Caco-2 (cell line): ENCODE measurements at regions of chr11 and their contacts with region 1.

Region 1: DNA sequence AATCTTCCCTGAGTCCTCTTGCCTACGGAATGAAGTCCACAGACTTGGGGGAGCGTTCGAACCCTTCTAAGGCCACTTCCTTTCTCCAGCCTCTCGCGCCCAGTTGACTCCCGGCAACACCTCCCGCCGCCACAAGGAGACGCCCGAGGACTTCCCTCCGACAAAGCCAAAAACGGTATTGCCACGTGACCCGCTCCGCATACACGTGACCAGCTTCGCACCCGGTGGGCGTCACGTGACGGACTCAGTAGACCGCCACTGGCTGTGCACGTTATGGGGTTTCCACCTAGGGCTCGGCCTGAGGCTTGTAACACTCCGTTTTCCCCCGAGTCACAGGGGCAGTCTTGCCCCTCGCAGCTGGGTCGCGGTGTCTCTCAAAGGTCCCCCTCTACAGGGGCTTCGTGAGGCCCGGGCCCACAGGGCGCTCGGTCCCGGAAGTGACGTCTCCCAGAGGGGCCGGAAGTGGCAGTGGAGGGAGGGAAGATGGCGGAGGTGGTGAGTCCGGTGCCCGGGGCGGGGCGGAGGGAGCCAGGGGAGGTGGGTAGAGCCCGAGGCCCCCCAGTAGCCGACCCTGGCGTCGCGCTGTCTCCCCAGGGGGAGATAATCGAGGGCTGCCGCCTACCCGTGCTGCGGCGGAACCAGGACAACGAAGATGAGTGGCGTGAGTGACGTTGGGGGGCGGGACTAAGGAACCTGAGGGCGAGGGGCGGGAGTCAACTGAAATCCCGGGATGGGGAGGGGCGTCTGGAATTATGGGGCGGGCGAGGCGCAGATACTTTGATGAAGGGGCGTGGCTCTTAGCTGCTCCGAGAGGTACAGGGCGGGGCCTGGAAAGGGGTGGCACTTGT is at the start of gene KAT5:
- DNase-seq: peak; percentile 98 to 99
- H3K4me3 ChIP-seq: peak within 1 kb of the TSS; percentile 66
- H3K4me3 Mint-ChIP-seq: peak within 1 kb of the TSS; percentile 83
- H3K27ac Mint-ChIP-seq: peak within 1 kb of the TSS; percentile 98
- H3K4me1 ChIP-seq: peaks cover 21% of the 10 kb centered on the region
- H3K4me1 Mint-ChIP-seq: peaks cover 13% of the 10 kb centered on the region
- H3K27me3 ChIP-seq: no peaks in the 10 kb centered on the region
- H3K27me3 Mint-ChIP-seq: no peaks in the 10 kb centered on the region
- CTCF ChIP-seq: peak; percentile 97 to 98
- total RNA-seq, gene KAT5: 60.2 and 70.1 TPM in 2 replicates

Region 2: GRCh38 chr11:65773784-65774411 is 61.9 kb after region 1 on chr11:
- CTCF ChIA-PET with region 1: interaction called, 18 read pairs
- POLR2A ChIA-PET with region 1: interaction called, 5 read pairs
- intact Hi-C with region 1: loop called (anchors 5 kb)
- DNase-seq: no peak
- H3K4me3 ChIP-seq: no peak overlapping the region
- H3K4me3 Mint-ChIP-seq: no peak overlapping the region
- H3K27ac Mint-ChIP-seq: no peak overlapping the region
- H3K4me1 ChIP-seq: peaks cover 15% of the 10 kb centered on the region
- H3K4me1 Mint-ChIP-seq: peaks cover 15% of the 10 kb centered on the region
- H3K27me3 ChIP-seq: no peaks in the 10 kb centered on the region
- H3K27me3 Mint-ChIP-seq: no peaks in the 10 kb centered on the region
- CTCF ChIP-seq: no peak

Region 3: DNA sequence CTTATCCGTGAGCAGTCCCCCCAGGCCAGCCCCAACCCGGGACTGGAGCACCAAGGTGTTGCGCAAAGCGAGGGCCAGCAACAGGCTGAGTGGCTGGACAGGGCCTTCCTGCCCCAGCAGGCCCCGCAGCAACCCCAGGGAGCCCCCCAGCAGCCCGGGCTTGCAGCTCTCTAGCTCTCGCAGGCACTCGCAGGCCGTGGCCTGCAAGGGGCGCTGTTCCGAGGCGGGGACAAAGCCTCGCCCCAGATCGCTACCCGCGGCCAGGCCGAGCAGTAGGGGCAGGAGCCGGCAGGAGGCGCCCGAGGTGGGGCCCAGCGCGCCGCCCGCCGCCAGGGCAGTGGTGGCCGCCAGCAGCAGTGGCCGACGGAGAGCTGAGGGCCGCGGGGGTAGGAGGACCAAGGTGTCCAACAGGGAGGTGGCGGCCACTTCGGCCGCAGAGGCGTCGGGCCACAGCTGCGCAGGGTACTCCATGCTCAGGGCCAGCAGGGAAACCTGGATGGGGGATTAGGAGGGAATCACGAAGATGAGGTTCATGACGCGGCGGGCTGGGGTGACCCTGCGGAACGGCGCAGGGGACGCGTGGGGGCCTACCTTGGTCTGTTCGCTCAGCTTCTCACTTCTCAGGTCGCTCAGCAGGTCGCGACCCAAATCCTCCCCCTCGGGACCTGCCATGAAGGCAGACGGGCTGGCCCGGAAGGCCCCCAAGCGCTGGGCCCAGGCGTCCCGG is 68.0 kb after region 1 on chr11:
- CTCF ChIA-PET with region 1: interaction called, 18 read pairs
- POLR2A ChIA-PET with region 1: interaction called, 5 read pairs
- intact Hi-C with region 1: loop called (anchors 2 kb)
- DNase-seq: peak; percentile 66 to 82
- H3K4me3 ChIP-seq: peak overlapping the region; percentile 56
- H3K4me3 Mint-ChIP-seq: peak overlapping the region; percentile 91
- H3K27ac Mint-ChIP-seq: peak overlapping the region; percentile 75
- H3K4me1 ChIP-seq: peaks cover 16% of the 10 kb centered on the region
- H3K4me1 Mint-ChIP-seq: peaks cover 8% of the 10 kb centered on the region
- H3K27me3 ChIP-seq: no peaks in the 10 kb centered on the region
- H3K27me3 Mint-ChIP-seq: no peaks in the 10 kb centered on the region
- CTCF ChIP-seq: peak; percentile 54 to 71

Region 4: GRCh38 chr11:65834202-65834601 is 122.2 kb after region 1 on chr11:
- CTCF ChIA-PET with region 1: no interaction called
- POLR2A ChIA-PET with region 1: no interaction called
- intact Hi-C with region 1: no loop called
- DNase-seq: no peak
- H3K4me3 ChIP-seq: no peak overlapping the region
- H3K4me3 Mint-ChIP-seq: no peak overlapping the region
- H3K27ac Mint-ChIP-seq: no peak overlapping the region
- H3K4me1 ChIP-seq: no peaks in the 10 kb centered on the region
- H3K4me1 Mint-ChIP-seq: no peaks in the 10 kb centered on the region
- H3K27me3 ChIP-seq: no peaks in the 10 kb centered on the region
- H3K27me3 Mint-ChIP-seq: peaks cover 3% of the 10 kb centered on the region
- CTCF ChIP-seq: no peak